GM12878 (cell line): ENCODE measurements at regions of chr15 and their contacts with region 1.

Region 1: DNA sequence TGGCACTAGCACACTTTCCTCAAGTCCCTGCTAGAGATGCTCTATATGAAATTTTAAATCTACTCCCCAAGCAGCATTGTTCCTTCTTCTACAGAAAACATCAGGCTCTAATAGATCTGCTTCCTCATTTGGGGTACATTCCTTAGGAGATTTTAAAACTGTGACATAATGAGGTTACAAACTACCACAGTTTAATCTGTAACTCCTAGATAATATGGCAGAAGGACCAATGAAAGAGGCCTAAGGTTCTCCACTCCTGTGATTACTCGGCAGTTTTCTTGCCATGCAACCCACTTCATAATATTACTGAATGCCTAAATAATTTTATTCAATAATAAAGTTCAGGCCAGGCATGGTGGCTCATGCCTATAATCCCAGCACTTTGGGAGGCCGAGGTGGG is 16.1 kb downstream of the ZNF106 start:
- DNase-seq: no peak
- ATAC-seq: no peak
- H3K4me3 ChIP-seq: no peak overlapping the region
- H3K27ac ChIP-seq: no peak overlapping the region
- H3K4me1 ChIP-seq: no peaks in the 10 kb centered on the region
- H3K27me3 ChIP-seq: no peaks in the 10 kb centered on the region
- CTCF ChIP-seq: no peak
- EP300 ChIP-seq: no peak
- POLR2A ChIP-seq: no peak
- RAD21 ChIP-seq: no peak

Region 2: DNA sequence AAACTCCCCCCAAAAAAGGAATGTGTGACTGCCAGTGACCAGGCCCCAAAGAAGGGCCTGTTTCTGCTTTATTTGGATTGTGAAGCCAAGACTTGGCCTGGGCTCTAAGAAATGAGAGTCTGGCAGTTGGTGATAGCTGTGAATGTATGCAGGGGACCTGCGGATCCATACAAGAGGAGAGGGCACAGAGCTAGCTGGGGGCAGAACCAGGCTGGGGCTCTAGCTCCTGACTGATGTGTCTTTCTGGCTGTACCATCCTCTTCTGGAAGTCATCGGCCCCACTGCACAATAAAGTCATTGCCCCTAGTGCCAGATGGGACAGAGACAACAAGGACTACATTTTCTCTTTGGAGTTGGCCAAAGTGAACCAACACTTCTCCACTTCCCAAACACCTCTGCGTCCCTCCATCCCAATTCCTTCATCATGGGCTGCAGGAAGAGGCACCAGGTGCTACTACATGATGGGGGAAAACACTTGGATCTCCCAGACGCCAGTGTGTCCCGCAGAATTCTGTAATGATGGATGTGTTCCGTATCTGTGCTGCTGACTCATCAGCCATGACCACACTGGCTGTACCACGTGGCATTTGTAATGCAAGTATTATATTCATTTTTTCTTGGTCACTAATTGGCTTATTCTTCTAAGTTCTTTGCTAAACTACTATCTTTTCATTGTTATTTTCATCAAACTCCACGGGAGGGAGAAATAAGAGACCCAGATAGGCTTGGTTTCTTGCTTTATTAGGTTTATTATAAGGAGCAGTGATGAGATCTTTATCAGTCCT is 316.7 kb before region 1 on chr15:
- CTCF ChIA-PET with region 1: no interaction called
- POLR2A ChIA-PET with region 1: no interaction called
- RAD21 ChIA-PET with region 1: no interaction called
- SMC1A ChIA-PET with region 1: no interaction called
- in situ Hi-C with region 1: no loop called
- intact Hi-C with region 1: no loop called
- DNase-seq: no peak
- ATAC-seq: no peak
- H3K4me3 ChIP-seq: no peak overlapping the region
- H3K27ac ChIP-seq: no peak overlapping the region
- H3K4me1 ChIP-seq: no peaks in the 10 kb centered on the region
- H3K27me3 ChIP-seq: no peaks in the 10 kb centered on the region
- CTCF ChIP-seq: no peak
- EP300 ChIP-seq: no peak
- POLR2A ChIP-seq: peak; percentile 14; the same call in 1 of the 2 replicates
- RAD21 ChIP-seq: no peak

Region 3: DNA sequence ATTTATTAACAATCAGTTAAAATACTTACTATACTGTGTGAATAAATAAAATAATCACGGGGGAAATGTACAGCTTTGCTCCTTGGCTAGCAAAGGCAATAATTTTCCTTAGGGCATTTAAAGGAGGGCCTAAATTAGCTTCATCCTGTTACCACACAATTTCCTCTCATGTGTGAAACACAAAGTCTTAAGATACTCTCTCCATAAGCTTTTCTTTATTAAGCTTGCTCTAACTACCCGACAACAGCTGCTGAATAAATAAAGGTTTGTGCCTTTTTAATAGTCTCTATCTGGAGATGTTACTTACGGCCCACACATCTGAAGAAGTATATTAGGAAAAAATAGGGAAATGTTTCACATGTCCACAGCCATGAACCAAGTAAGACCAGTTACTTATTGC is 13.6 kb before region 1 on chr15:
- CTCF ChIA-PET with region 1: interaction called, 10 read pairs
- POLR2A ChIA-PET with region 1: interaction called, 5 read pairs
- RAD21 ChIA-PET with region 1: interaction called, 4 read pairs
- SMC1A ChIA-PET with region 1: interaction called, 8 read pairs
- in situ Hi-C with region 1: no loop called
- intact Hi-C with region 1: no loop called
- DNase-seq: no peak
- ATAC-seq: no peak
- H3K4me3 ChIP-seq: no peak overlapping the region
- H3K27ac ChIP-seq: no peak overlapping the region
- H3K4me1 ChIP-seq: peaks cover 8% of the 10 kb centered on the region
- H3K27me3 ChIP-seq: no peaks in the 10 kb centered on the region
- CTCF ChIP-seq: no peak
- EP300 ChIP-seq: no peak
- POLR2A ChIP-seq: no peak
- RAD21 ChIP-seq: no peak